ENCODE measurements at regions of chr9 and their contacts with region 1.

Region 1: DNA sequence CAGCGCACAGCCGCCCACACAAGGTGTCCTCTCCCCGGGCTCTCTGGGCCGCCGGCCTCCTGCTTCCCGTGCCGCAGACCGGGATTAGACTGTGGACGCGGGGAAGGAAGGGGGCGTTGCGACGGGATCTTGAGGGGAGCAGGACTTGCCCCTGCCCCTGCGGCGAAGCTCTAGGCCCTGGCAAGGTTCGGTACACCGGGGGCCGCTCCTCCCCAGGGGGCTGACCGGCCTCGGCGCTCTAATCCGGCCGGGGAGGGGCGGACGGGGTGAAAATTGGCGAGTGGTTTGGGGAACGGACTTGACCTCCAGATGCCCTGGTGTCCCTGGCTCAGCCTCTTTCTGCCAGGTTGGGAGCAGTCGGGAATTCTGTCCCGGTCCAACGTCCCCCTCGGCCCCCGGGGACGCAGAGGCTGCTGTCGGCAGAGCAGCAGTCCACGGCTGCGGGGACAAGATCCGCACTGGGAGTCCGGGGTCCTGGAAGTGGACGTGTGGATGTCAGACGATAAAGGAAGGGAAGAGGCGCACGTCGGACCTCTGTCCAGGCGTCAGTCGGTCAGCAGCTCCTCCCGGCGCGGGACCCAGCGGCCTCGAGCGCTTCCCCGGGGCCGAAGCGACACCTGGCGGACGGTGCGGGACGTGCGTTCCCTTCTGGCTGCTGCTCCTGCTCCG is 1.9 kb upstream of the CNTFR start:
- DNase-seq: peak; percentile 70
- H3K4me3 ChIP-seq: no peak overlapping the region
- H3K27ac ChIP-seq: no peak overlapping the region
- H3K4me1 ChIP-seq: no peaks in the 10 kb centered on the region
- H3K27me3 ChIP-seq: peaks cover 66 to 75% of the 10 kb centered on the region in 2 experiments
- CTCF ChIP-seq: peak; percentile 88 to 99
- POLR2A ChIP-seq: no peak

Region 2: DNA sequence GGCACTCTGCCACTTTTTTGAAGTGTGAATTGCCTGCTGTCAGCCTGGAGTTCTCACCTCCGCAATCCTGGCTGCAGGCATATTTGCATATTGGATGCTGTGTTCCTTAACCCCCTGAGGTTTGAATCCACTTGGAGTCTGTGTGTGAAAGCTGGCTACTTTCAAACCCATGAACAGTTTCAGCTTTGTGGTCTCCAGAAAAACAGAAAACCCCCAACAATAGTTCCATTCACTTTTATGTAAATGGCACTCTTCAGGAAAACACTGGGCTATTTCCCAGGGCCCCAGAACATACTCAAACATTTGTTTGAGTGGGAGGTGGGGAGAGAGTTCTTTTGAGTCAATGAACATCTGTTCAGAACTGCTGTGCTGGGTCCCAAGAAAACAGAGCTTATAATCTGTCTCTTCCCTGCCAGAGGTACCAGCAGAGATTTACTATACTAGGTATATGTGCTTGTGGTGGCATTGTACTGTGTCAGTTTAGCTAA is 257.0 kb before region 1 on chr9:
- CTCF ChIA-PET with region 1: interaction called, 16 read pairs
- POLR2A ChIA-PET with region 1: no interaction called
- dilution Hi-C with region 1: no loop called
- intact Hi-C with region 1: no loop called
- DNase-seq: no peak
- H3K4me3 ChIP-seq: no peak overlapping the region
- H3K27ac ChIP-seq: no peak overlapping the region
- H3K4me1 ChIP-seq: no peaks in the 10 kb centered on the region
- H3K27me3 ChIP-seq: no peaks in the 10 kb centered on the region
- CTCF ChIP-seq: no peak
- POLR2A ChIP-seq: no peak

Region 3: GRCh38 chr9:34437006-34437925 is 154.1 kb before region 1 on chr9:
- CTCF ChIA-PET with region 1: interaction called, 58 read pairs
- POLR2A ChIA-PET with region 1: no interaction called
- dilution Hi-C with region 1: no loop called
- intact Hi-C with region 1: loop called (anchors 2 kb)
- DNase-seq: peak; percentile 83
- H3K4me3 ChIP-seq: no peak overlapping the region
- H3K27ac ChIP-seq: no peak overlapping the region
- H3K4me1 ChIP-seq: peaks cover 18% of the 10 kb centered on the region
- H3K27me3 ChIP-seq: no peaks in the 10 kb centered on the region
- CTCF ChIP-seq: peak; percentile 75 to 77
- POLR2A ChIP-seq: no peak

Region 4: DNA sequence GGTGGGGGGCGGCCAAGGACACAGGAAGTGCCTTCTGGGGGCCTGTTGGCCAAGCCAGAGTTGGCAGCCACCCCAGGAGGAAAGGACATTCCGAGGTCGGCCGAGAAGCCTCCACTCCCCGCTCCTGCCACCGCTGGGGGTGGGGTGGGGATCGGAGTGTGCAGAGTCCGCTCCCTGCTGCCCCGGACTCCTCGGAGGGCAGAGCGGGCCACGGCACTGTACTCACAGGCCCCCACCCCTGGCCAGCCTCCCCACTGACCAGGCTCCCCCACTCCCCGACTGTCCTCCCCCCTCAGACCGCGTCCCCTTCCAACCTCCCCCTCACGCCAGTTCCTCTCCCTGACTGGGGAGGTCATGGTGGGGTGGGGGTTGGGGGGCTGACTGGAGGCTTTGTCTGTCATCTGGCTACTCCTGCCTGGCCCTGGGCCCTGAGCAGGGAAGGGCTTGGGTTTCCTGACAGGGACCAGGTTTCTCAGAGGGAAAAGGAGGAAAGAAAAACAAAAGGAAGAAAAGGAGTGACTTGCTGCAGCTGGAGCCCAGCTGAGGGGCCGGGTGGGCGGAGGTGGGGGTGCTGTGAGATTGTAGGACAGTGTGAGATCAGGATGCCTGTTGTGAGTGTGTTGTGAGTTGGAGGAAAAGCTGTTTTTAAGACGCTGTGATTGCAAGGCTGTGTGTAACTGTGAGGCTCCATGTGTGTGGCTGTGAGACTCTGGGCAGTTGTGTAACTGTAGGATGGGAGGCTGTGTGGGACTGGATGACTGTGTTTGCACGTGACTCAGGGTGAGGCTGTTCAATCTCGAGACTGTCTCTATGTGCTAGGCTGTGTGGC is 31.5 kb before region 1 on chr9:
- CTCF ChIA-PET with region 1: interaction called, 26 read pairs
- POLR2A ChIA-PET with region 1: no interaction called
- dilution Hi-C with region 1: no loop called
- intact Hi-C with region 1: no loop called
- DNase-seq: peak; percentile 21
- H3K4me3 ChIP-seq: no peak overlapping the region
- H3K27ac ChIP-seq: no peak overlapping the region
- H3K4me1 ChIP-seq: no peaks in the 10 kb centered on the region
- H3K27me3 ChIP-seq: peaks cover 15 to 29% of the 10 kb centered on the region in 2 experiments
- CTCF ChIP-seq: no peak
- POLR2A ChIP-seq: no peak

Region 5: GRCh38 chr9:34578241-34579103 is 12.9 kb before region 1 on chr9:
- CTCF ChIA-PET with region 1: interaction called, 106 read pairs
- POLR2A ChIA-PET with region 1: no interaction called
- dilution Hi-C with region 1: no loop called
- intact Hi-C with region 1: no loop called
- DNase-seq: peak; percentile 28
- H3K4me3 ChIP-seq: no peak overlapping the region
- H3K27ac ChIP-seq: no peak overlapping the region
- H3K4me1 ChIP-seq: no peaks in the 10 kb centered on the region
- H3K27me3 ChIP-seq: peaks cover 59 to 61% of the 10 kb centered on the region in 2 experiments
- CTCF ChIP-seq: no peak
- POLR2A ChIP-seq: no peak

Region 6: DNA sequence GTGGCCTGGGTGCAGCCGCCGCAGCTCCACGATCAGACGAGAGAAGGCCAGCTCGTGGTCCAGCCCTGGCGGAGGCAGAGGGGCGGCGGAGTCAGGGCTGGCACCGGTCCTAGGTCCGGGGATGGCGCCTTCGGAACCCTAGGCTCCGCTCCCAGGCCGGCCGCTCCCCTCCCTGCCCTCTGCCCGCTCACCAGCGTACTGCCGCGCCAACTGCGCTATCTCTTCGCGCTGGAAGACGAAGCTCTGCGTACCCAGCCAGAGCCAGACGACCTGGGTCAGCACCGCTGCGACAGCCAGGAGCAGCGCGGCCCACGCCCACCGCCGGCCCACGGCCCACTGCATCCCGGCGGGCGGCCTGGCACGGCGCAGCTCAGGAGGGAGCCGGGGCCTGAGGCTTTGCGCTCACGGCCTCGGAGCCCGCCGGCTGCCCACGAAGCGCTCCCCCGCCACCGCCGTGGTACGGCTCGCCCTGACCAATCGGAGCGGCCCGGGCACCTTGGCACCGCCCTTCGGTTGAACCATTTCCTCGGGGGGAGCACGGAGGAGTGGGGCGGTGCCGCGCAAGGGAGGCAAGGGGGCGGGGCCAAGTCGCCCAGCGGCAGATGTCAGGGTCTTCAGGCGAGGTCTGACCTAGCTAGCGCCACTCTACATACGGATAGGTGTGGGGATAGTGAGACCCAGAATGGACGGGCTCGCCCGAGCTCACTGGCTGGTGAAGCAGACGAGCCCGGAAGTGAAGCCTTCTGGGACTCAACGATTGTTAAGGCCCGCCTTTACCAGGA is 46.2 kb after region 1 on chr9 and contains the start of gene SIGMAR1:
- CTCF ChIA-PET with region 1: interaction called, 25 read pairs
- POLR2A ChIA-PET with region 1: no interaction called
- dilution Hi-C with region 1: no loop called
- intact Hi-C with region 1: no loop called
- DNase-seq: peak; percentile 91
- H3K4me3 ChIP-seq: peak within 1 kb of the TSS; percentile 10 to 63 (median 47)
- H3K27ac ChIP-seq: peak within 1 kb of the TSS; percentile 33
- H3K4me1 ChIP-seq: peaks cover 16% of the 10 kb centered on the region
- H3K27me3 ChIP-seq: no peaks in the 10 kb centered on the region
- CTCF ChIP-seq: no peak
- POLR2A ChIP-seq: peak; percentile 81
- total RNA-seq, gene SIGMAR1: 74.1 and 81.2 TPM in 2 replicates